ENCODE measurements at regions of chr3 and their contacts with region 1.

Region 1: DNA sequence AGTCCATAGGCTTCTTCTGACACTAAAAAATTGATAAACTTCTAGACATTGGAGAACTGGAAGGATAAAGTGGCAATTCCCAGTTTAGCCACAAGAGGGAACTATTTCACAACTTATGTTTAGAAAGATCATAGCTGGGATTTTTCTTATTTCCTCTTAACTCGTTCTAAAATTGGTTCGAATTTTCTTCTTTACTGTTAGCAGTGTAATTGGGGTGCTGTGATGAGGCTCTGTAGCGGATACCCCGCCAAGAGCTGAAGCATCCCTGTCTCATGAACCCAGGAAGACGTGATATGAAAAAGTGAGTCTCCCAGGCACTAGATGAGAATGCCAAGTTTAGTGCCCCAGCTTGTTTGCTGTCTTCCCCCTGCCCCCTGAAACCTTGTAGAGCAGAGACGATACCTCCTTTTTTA is 85.1 kb downstream of the PDCD6IP start:
- DNase-seq: no peak
- H3K4me3 ChIP-seq: no peak overlapping the region
- CTCF ChIP-seq: peak; percentile 56

Region 2: DNA sequence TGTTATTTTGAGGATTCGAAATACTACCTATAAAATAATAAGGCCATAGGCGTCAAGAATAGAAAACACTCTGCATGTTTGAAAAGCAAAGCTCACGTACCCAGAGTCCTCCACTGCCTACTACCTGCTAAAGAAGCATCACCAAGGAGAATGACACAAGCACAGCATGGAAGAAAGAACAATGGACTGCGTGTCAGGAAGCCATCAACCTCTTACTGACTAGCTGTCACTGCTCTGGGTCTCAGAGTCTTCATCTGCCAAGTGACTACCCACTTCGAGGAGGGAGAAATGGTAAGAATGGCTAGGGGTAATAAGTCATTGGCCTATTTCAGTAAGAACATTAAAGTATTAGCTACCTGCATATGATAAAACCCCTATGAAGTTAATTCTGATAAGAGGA is 214.9 kb before region 1 on chr3:
- CTCF ChIA-PET with region 1: no interaction called
- POLR2A ChIA-PET with region 1: no interaction called
- DNase-seq: no peak
- H3K4me3 ChIP-seq: no peak overlapping the region
- CTCF ChIP-seq: no peak

Region 3: GRCh38 chr3:33897306-33897705 is 13.8 kb after region 1 on chr3:
- CTCF ChIA-PET with region 1: interaction called, 14 read pairs
- POLR2A ChIA-PET with region 1: no interaction called
- DNase-seq: no peak
- H3K4me3 ChIP-seq: no peak overlapping the region
- CTCF ChIP-seq: no peak